Thyroid gland (tissue), 4 donors: ENCODE measurements at regions of chr14 and their contacts with region 1.

Region 1: GRCh38 chr14:76050797-76051392 is 65.3 kb downstream of the IFT43 start:
- DNase-seq: peak; percentile 25 to 51
- H3K4me3 ChIP-seq: no peak overlapping the region
- H3K27ac ChIP-seq: no peak overlapping the region
- H3K4me1 ChIP-seq: no peaks in the 10 kb centered on the region
- H3K27me3 ChIP-seq: no peaks in the 10 kb centered on the region
- CTCF ChIP-seq: peak; percentile 44 to 79 (median 59)
- POLR2A ChIP-seq: no peak

Region 2: DNA sequence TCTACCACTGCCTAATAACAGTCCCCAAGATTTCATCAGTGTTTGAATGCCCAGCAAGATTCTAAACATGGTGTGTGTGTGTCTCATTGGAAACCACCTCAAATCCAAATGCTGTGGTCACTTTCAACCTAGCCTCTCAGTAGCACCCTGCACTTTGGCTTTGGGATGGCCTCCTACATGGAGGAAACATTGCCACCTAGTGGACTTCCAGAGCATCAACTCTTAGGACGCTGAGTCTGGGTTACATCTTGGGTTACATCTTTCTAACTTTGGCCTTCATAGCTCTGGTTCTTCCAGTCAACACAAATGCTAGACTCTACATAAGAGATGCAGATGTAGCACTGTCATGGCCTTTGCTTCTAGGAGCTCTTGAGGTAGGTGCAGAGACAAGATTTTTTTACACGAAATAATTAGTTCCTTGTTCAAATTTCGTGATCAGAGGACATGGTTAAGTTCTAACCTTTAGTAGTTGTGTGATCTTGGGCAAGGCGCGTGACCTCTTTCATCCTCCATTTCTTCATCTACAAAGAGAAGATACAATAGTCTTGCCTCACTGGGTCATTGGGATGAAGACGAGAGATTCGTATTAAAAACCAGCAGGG is 596.9 kb after region 1 on chr14:
- intact Hi-C with region 1: loop called (anchors 5 kb)
- DNase-seq: peak; percentile 18 to 38
- H3K4me3 ChIP-seq: no peak overlapping the region
- H3K27ac ChIP-seq: no peak overlapping the region
- H3K4me1 ChIP-seq: no peaks in the 10 kb centered on the region
- H3K27me3 ChIP-seq: no peaks in the 10 kb centered on the region
- CTCF ChIP-seq: peak; percentile 44 to 80 (median 64)
- POLR2A ChIP-seq: no peak